Gastrocnemius medialis (tissue), 4 donors: ENCODE measurements at regions of chr11 and their contacts with region 1.

Region 1: DNA sequence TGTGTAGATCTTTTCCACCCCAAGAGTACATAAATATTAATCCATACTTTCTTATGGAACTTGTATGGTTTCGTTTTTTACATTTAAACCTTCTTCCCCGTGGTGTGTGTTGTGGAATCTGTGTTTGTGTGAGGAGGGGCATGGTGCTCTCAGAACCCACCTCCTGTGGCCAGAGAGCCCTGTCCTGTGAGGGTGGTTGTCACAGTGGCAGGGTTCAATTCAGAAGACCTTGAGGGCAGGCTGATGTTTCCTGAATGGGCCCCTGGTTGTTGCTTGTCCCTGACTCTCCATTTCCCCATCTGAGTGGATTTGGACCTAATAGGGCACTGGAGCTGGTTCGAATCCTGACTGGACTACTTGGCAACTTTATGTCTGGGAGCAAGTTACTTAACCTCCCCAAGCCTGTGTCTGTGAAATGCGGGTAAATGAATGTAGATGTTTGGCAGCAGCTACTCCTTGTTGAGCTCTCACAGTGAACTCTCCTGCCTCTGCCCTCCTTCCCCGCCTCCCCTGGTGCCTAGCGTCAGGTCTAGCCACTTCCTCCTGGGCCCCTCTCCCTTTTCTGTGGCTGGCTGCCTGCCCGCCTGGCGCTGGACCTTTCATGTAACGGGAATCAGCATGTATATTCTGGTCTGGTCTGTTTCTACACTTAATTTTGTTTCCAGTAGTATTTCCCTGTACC is 7.3 kb downstream of the NEAT1 start:
- DNase-seq: peak in 1 of 2 donors; percentile 68
- ATAC-seq: peak in 1 of 2 donors; percentile 1
- H3K4me3 ChIP-seq: peak overlapping the region; percentile 81 to 95 (median 90)
- H3K27ac ChIP-seq: peak overlapping the region; percentile 98 to 100 (median 100)
- H3K4me1 ChIP-seq: peaks cover 58 to 61% of the 10 kb centered on the region in 2 donors
- H3K27me3 ChIP-seq: no peaks in the 10 kb centered on the region
- CTCF ChIP-seq: no peak
- POLR2A ChIP-seq: peak in 1 of 2 donors; percentile 55

Region 2: GRCh38 chr11:64652586-64653387 is 777.1 kb before region 1 on chr11:
- in situ Hi-C with region 1: no loop called
- intact Hi-C with region 1: no loop called
- DNase-seq: peak; percentile 39 to 59
- ATAC-seq: peak; percentile 51 to 90
- H3K4me3 ChIP-seq: no peak overlapping the region
- H3K27ac ChIP-seq: no peak overlapping the region
- H3K4me1 ChIP-seq: peaks cover 0 to 3% of the 10 kb centered on the region in 2 donors
- H3K27me3 ChIP-seq: no peaks in the 10 kb centered on the region
- CTCF ChIP-seq: peak; percentile 62 to 88 (median 84)
- POLR2A ChIP-seq: no peak

Region 3: GRCh38 chr11:64960719-64961118 is 469.1 kb before region 1 on chr11:
- in situ Hi-C with region 1: no loop called
- intact Hi-C with region 1: no loop called
- DNase-seq: no peak
- ATAC-seq: no peak
- H3K4me3 ChIP-seq: no peak overlapping the region
- H3K27ac ChIP-seq: no peak overlapping the region
- H3K4me1 ChIP-seq: no peaks in the 10 kb centered on the region
- H3K27me3 ChIP-seq: no peaks in the 10 kb centered on the region
- CTCF ChIP-seq: no peak
- POLR2A ChIP-seq: no peak

Region 4: DNA sequence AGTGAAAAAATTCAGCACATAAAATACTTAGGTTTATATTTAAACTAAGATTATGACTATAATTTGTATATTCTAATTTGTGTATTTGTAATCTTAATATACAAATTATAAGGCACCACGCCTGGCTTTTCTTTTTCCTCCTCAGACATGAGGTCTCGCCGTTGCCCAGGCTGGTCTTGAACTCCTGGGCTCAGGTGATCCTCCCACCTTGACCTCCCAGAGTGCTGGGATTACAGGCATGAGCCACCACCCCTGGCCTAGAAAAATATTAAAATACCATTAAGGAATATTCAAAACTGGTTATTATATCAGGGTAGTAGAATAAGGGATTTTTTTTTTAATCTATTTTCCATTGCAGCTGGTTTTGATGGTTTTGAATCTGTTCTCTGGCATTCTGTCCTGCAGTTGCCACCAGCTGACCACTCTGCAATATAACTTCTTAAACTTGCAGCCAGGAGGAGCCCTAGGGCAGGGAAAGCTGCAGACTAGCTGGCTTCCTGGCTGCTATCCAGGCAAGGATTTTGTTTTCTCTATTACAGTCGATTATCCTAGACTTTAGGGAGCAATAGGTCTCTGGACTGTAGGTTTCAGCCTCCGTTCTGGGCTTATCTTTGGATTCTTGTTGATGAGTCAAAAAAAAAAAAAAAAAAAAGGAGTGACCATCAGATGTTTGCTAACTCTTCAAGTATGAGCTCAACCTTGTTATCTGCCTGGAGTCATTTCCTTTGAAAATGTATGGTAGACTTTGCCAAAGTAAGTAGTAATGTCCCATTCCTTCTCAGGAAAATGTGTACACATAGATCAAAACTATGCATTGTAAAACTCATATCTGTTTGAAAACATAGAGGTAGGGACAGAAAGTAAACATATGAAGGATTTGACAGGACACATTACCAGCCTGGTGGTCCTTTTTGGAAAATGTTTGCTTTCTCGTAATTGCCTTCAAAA is 154.9 kb before region 1 on chr11:
- in situ Hi-C with region 1: no loop called
- intact Hi-C with region 1: no loop called
- DNase-seq: peak; percentile 69 to 73
- ATAC-seq: peak; percentile 87 to 92
- H3K4me3 ChIP-seq: no peak overlapping the region
- H3K27ac ChIP-seq: peak overlapping the region in 2 of 4 donors; percentile 22 to 30
- H3K4me1 ChIP-seq: peaks cover 0 to 5% of the 10 kb centered on the region in 2 donors
- H3K27me3 ChIP-seq: no peaks in the 10 kb centered on the region
- CTCF ChIP-seq: peak; percentile 79 to 93 (median 90)
- POLR2A ChIP-seq: no peak

Region 5: GRCh38 chr11:65334696-65335295 is 95.1 kb before region 1 on chr11:
- in situ Hi-C with region 1: no loop called
- intact Hi-C with region 1: no loop called
- DNase-seq: no peak
- ATAC-seq: no peak
- H3K4me3 ChIP-seq: peak overlapping the region; percentile 85 to 99 (median 92)
- H3K27ac ChIP-seq: peak overlapping the region; percentile 91 to 95 (median 93)
- H3K4me1 ChIP-seq: peaks cover 23 to 30% of the 10 kb centered on the region in 2 donors
- H3K27me3 ChIP-seq: no peaks in the 10 kb centered on the region
- CTCF ChIP-seq: no peak
- POLR2A ChIP-seq: no peak

Region 6: GRCh38 chr11:65445874-65446445 is 16.1 kb after region 1 on chr11:
- in situ Hi-C with region 1: no loop called
- intact Hi-C with region 1: loop called (anchors 2 kb)
- DNase-seq: peak in 1 of 2 donors; percentile 74
- ATAC-seq: peak; percentile 18 to 24
- H3K4me3 ChIP-seq: no peak overlapping the region
- H3K27ac ChIP-seq: peak overlapping the region; percentile 98 to 100 (median 100)
- H3K4me1 ChIP-seq: peaks cover 10 to 17% of the 10 kb centered on the region in 2 donors
- H3K27me3 ChIP-seq: no peaks in the 10 kb centered on the region
- CTCF ChIP-seq: no peak
- POLR2A ChIP-seq: no peak